HCT116 (cell line): ENCODE measurements at regions of chr10 and their contacts with region 1.

Region 1: GRCh38 chr10:71696628-71697326 is 22.8 kb downstream of the C10orf105 start:
- DNase-seq: no peak
- ATAC-seq: peak; percentile 96
- H3K4me3 ChIP-seq: no peak overlapping the region
- H3K27ac ChIP-seq: no peak overlapping the region
- H3K4me1 ChIP-seq: peaks cover 0 to 8% of the 10 kb centered on the region in 2 experiments; a peak in 1 of 4 replicates
- H3K27me3 ChIP-seq: no peaks in the 10 kb centered on the region
- CTCF ChIP-seq: peak; percentile 81 to 99 (median 97)
- POLR2A ChIP-seq: no peak
- RAD21 ChIP-seq: peak; percentile 71

Region 2: DNA sequence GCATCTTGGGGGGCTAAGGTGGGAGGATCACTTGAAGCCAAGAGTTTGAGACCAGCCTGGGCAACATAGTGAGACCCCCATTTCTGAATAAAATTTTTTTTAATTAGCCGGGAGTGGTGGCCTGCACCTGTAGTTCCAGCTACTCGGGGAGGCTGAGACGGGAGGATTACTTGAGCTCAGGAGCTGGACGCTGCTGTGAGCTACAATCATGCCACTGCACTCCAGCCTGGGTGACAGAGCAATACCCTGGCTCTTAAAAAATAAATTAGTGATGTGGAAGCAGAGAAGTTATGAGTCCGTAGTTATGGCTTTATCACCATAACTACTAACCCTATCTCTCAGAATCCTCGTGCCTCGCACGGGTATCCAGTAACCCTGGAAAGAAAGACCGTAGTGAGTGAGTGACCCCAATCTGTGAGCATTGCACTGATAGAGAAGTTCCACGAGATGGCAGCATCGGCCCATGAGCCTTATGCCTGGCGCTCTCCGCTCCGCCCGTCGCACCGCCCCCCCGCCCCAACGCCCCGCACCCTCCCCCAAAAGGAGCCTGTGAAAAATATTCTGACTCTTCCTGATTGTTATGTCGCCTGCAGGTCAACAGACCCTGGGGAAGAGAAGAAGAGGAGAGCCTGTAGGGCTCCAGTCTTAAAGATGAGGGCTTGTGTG is 382.6 kb before region 1 on chr10:
- CTCF ChIA-PET with region 1: interaction called, 38 read pairs
- POLR2A ChIA-PET with region 1: interaction called, 6 read pairs
- RAD21 ChIA-PET with region 1: interaction called in 1 of 2 experiments, 3 read pairs
- intact Hi-C with region 1: loop called (anchors 1 kb)
- DNase-seq: peak; percentile 21
- ATAC-seq: peak; percentile 70
- H3K4me3 ChIP-seq: no peak overlapping the region
- H3K27ac ChIP-seq: no peak overlapping the region
- H3K4me1 ChIP-seq: peaks cover 3 to 10% of the 10 kb centered on the region in 2 experiments; a peak in 2 of 4 replicates
- H3K27me3 ChIP-seq: no peaks in the 10 kb centered on the region
- CTCF ChIP-seq: peak; percentile 65 to 76 (median 72)
- POLR2A ChIP-seq: no peak
- RAD21 ChIP-seq: peak; percentile 85

Region 3: DNA sequence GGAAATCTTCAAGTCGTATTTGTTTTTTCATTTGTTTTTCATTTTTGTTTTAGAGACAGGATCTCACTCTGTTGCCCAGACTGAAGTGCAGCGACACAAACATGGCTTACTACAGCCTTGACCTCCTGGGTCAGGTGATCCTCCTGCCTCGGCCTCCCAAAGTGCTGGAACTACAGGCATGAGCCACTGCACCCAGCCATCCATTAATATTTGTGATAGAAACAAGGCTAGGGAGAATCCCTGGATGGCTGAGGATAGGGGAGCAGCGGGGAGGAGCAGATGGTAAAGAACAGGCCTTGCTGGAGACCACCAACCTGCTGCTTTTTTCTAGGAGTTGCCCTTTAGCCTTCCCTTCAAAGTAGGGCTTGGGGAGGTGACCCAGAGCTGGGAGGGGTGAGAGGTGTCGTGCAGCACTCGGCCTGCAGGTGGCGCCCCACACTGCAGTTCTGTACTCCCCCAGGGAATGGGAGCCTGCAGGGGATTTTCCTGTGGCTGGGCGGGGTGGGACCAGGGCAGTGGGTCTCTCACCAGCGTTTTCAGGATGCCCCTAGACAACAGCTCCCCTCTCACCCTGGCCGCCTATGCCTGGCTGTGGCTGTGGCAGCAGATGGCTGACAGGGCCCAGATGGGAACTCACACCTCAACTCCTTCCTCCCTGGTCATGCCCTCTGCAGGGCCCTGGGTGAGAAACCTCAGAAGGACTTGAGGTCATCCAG is 312.6 kb before region 1 on chr10:
- CTCF ChIA-PET with region 1: interaction called, 32 read pairs
- POLR2A ChIA-PET with region 1: no interaction called
- RAD21 ChIA-PET with region 1: interaction called in 1 of 2 experiments, 4 read pairs
- intact Hi-C with region 1: loop called (anchors 1 kb)
- DNase-seq: no peak
- ATAC-seq: peak; percentile 98
- H3K4me3 ChIP-seq: no peak overlapping the region
- H3K27ac ChIP-seq: no peak overlapping the region
- H3K4me1 ChIP-seq: peaks cover 0 to 2% of the 10 kb centered on the region in 2 experiments; a peak in 1 of 4 replicates
- H3K27me3 ChIP-seq: no peaks in the 10 kb centered on the region; the same call in 1 of the 2 replicates
- CTCF ChIP-seq: peak; percentile 90 to 97 (median 96)
- POLR2A ChIP-seq: no peak
- RAD21 ChIP-seq: peak; percentile 92

Region 4: DNA sequence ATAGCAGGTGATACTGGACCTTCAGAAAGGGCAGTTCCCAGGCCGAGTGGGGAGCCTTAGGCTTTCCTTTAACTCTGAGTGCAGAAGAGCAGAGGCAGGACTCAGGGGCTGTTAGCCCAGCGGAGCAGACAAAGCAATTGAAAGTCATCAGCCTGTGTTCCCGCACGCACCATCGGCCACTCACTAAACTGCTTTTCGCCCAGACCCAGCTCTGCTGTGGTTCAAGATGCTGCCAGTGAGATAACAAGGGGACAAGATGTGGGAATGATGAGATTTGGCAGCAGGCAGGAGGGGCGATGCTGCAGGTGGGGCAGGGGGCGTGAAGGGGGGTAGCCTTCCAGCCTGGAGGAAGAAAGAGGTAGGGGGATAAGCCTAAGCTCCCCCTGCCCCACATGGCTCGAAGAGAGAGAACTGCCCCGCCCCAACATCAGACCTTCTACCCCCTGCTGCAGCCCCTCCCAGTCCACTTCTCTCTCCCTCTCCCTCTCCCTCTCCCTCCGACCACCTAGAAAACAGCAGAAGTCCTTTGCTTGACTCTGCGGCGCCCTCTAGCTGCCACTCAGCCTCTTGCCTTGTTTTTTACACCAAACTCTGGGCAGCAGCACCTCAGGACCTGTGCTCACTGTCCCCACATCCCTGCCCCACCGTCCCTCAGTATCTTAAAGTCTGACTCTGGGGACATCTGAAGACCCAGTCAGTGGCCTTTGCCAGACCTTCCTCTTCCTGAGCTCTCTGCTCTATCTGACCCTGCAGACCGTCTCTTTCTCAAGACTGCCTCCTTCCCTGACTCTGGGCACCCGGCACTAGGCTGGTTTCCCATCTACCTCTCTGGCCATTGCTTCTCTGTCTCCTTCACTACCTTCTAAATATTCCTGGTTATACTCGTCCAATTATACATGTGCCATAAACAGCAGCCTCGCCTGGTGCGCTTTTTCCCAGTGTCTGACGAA is 87.7 kb before region 1 on chr10:
- CTCF ChIA-PET with region 1: interaction called, 12 read pairs
- POLR2A ChIA-PET with region 1: interaction called, 3 read pairs
- RAD21 ChIA-PET with region 1: no interaction called
- intact Hi-C with region 1: no loop called
- DNase-seq: peak; percentile 49
- ATAC-seq: peak; percentile 75
- H3K4me3 ChIP-seq: no peak overlapping the region
- H3K27ac ChIP-seq: no peak overlapping the region
- H3K4me1 ChIP-seq: peaks cover 11 to 27% of the 10 kb centered on the region in 2 experiments
- H3K27me3 ChIP-seq: no peaks in the 10 kb centered on the region
- CTCF ChIP-seq: peak; percentile 59 to 94 (median 88)
- POLR2A ChIP-seq: no peak
- RAD21 ChIP-seq: peak; percentile 75

Region 5: DNA sequence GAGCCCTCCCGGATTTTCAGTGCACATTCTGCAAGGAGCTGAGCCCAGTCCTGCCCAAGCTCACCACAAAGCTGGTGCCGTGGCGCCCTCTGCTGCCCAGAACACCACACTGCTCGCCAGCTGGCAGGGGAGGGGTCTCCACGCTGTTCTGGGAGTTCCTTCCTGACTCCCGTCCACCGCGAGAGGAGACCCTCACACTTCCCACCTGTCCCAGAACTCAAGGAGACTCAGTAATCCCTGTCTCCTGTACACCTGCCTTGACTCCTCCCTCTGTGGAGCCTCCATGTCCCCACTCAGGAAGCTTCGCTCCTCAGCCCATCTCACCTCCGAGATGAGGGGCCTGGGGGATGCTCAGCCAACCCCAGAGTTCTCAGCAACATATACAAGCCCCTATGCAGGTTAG is 11.5 kb after region 1 on chr10:
- CTCF ChIA-PET with region 1: interaction called, 57 read pairs
- POLR2A ChIA-PET with region 1: no interaction called
- RAD21 ChIA-PET with region 1: no interaction called
- intact Hi-C with region 1: no loop called
- DNase-seq: no peak
- ATAC-seq: peak; percentile 87
- H3K4me3 ChIP-seq: no peak overlapping the region
- H3K27ac ChIP-seq: no peak overlapping the region
- H3K4me1 ChIP-seq: 0 out of 4 replicates have a peak, but pooled peaks cover 0 to 4% of the 10 kb centered on the region in 2 experiments
- H3K27me3 ChIP-seq: no peaks in the 10 kb centered on the region
- CTCF ChIP-seq: peak; percentile 77 to 93 (median 89)
- POLR2A ChIP-seq: no peak
- RAD21 ChIP-seq: peak; percentile 93

Region 6: GRCh38 chr10:71735709-71736569 is 39.2 kb after region 1 on chr10:
- CTCF ChIA-PET with region 1: no interaction called
- POLR2A ChIA-PET with region 1: no interaction called
- RAD21 ChIA-PET with region 1: no interaction called
- intact Hi-C with region 1: no loop called
- DNase-seq: no peak
- ATAC-seq: peak; percentile 81
- H3K4me3 ChIP-seq: no peak overlapping the region
- H3K27ac ChIP-seq: peak overlapping the region; percentile 25; the same call in 1 of the 2 replicates
- H3K4me1 ChIP-seq: peaks cover 12 to 19% of the 10 kb centered on the region in 2 experiments; a peak in 3 of 4 replicates
- H3K27me3 ChIP-seq: no peaks in the 10 kb centered on the region
- CTCF ChIP-seq: no peak
- POLR2A ChIP-seq: no peak
- RAD21 ChIP-seq: no peak

Region 7: DNA sequence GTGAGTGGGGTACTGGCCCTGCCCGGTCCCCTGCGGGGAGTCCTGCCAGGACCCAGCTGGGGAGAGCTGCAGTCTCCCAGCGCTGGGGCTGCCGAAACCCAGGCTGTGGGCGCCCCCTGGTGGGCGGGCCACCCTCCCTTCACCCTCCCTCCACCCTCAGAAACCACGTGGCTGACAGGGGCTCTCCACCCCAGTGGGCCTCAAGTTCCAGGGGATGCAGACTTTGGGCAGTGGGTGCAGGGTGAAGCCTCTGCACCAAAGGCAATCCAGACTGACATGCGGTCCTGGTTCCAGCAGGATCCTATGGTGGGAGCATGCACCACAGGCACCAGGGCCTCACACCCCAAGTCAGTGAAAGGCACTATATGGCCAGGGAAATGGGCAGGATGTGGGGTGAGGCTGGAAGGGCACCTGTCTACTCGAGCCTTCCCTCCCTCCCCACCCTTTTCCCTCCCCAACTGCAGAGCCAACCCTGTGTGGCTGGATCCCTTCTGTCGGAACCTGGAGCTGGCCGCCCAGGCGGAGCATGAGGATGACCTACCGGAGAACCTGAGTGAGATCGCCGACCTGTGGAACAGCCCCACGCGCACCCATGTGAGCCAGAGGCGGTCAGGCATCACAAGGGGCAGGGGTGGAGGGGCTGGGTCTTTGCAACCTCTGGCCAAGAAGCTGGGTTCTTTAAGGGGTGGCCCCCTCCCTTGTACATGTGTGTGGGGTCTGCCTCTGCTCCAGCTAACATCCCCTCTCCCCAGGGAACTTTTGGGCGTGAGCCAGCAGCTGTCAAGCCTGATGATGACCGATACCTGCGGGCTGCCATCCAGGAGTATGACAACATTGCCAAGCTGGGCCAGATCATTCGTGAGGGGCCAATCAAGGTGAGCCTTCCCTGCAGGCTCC is 115.5 kb after region 1 on chr10:
- CTCF ChIA-PET with region 1: interaction called, 12 read pairs
- POLR2A ChIA-PET with region 1: no interaction called
- RAD21 ChIA-PET with region 1: interaction called in 1 of 2 experiments, 14 read pairs
- intact Hi-C with region 1: no loop called
- DNase-seq: peak; percentile 10
- ATAC-seq: peak; percentile 95
- H3K4me3 ChIP-seq: no peak overlapping the region
- H3K27ac ChIP-seq: no peak overlapping the region
- H3K4me1 ChIP-seq: peaks cover 0 to 13% of the 10 kb centered on the region in 2 experiments; a peak in 2 of 4 replicates
- H3K27me3 ChIP-seq: no peaks in the 10 kb centered on the region
- CTCF ChIP-seq: peak; percentile 88 to 92 (median 89)
- POLR2A ChIP-seq: no peak
- RAD21 ChIP-seq: peak; percentile 96